SK-N-SH (cell line): ENCODE measurements at regions of chr20 and their contacts with region 1.

Region 1: GRCh38 chr20:46689082-46689754 is at the start of gene TP53RK:
- DNase-seq: peak; percentile 87
- H3K4me3 ChIP-seq: peak within 1 kb of the TSS; percentile 71 to 84
- H3K27ac ChIP-seq: peak within 1 kb of the TSS; percentile 87 to 89
- H3K4me1 ChIP-seq: peaks cover 4 to 10% of the 10 kb centered on the region in 2 experiments; a peak in 3 of 4 replicates
- H3K27me3 ChIP-seq: no peaks in the 10 kb centered on the region
- CTCF ChIP-seq: 0 out of 2 replicates have a peak, but pooled peaks have one; percentile 16
- EP300 ChIP-seq: no peak
- RAD21 ChIP-seq: no peak
- polyA plus RNA-seq, gene TP53RK: 5.4 and 5.5 TPM in 2 replicates

Region 2: GRCh38 chr20:46520976-46521579 is 168.1 kb before region 1 on chr20:
- CTCF ChIA-PET with region 1: interaction called, 116 read pairs
- POLR2A ChIA-PET with region 1: no interaction called
- DNase-seq: peak; percentile 68
- H3K4me3 ChIP-seq: no peak overlapping the region
- H3K27ac ChIP-seq: no peak overlapping the region
- H3K4me1 ChIP-seq: no peaks in the 10 kb centered on the region
- H3K27me3 ChIP-seq: no peaks in the 10 kb centered on the region
- CTCF ChIP-seq: peak; percentile 60
- EP300 ChIP-seq: no peak
- RAD21 ChIP-seq: peak; percentile 94

Region 3: DNA sequence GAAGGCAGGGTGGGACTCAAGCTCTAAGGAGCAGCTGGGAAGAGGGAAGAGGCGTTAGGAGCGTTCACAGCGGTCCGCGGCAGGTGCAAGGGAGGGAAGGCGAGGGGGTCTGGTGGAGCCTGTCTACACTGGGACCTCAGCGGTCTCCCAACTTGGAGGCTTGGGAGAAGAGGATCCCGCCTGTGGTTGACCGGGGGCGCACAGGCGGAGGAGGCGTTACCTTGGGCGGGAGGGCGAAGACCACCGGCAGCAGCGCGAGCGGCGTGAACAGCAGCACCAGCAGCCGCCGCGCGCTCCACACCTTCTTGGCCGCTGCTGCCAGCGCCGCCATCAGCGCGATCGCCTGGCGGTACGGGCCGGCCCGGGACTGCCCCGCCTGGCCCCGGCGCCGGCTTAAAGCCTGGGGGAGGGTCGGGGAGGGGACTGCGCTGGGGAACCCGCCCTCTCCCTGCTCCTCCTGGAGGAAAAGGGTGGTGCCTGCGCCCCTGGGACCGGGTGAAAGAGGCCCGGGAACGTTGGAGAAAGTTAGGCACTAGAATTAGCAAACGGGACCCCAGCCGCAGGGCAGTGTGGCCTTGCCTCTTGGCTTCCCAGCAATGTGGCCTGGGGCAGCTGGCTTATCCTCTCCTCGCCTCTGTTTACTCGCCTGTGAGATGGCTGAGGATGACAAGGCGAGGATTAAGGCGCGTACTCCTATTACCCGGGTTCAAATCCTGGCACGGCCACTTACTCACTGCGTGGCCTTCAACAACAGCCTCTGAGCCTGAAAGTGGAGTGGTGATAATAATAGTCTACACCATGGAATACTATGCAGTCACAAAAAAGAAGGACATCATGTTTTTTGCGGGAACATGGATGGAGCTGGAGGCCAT is 37.9 kb before region 1 on chr20 and contains the start of gene SLC13A3:
- CTCF ChIA-PET with region 1: no interaction called
- POLR2A ChIA-PET with region 1: no interaction called
- DNase-seq: peak; percentile 74
- H3K4me3 ChIP-seq: peak within 1 kb of the TSS in 1 of 2 experiments; percentile 35; a peak in 2 of 4 replicates
- H3K27ac ChIP-seq: no peak within 1 kb of the TSS
- H3K4me1 ChIP-seq: peaks cover 0 to 3% of the 10 kb centered on the region in 2 experiments; a peak in 1 of 4 replicates
- H3K27me3 ChIP-seq: peaks cover 16% of the 10 kb centered on the region; the same call in 1 of the 2 replicates
- CTCF ChIP-seq: no peak
- EP300 ChIP-seq: no peak
- RAD21 ChIP-seq: no peak
- polyA plus RNA-seq, gene SLC13A3: 0.10 and 0.21 TPM in 2 replicates